ENCODE measurements at regions of chr1 and their contacts with region 1.

Region 1: DNA sequence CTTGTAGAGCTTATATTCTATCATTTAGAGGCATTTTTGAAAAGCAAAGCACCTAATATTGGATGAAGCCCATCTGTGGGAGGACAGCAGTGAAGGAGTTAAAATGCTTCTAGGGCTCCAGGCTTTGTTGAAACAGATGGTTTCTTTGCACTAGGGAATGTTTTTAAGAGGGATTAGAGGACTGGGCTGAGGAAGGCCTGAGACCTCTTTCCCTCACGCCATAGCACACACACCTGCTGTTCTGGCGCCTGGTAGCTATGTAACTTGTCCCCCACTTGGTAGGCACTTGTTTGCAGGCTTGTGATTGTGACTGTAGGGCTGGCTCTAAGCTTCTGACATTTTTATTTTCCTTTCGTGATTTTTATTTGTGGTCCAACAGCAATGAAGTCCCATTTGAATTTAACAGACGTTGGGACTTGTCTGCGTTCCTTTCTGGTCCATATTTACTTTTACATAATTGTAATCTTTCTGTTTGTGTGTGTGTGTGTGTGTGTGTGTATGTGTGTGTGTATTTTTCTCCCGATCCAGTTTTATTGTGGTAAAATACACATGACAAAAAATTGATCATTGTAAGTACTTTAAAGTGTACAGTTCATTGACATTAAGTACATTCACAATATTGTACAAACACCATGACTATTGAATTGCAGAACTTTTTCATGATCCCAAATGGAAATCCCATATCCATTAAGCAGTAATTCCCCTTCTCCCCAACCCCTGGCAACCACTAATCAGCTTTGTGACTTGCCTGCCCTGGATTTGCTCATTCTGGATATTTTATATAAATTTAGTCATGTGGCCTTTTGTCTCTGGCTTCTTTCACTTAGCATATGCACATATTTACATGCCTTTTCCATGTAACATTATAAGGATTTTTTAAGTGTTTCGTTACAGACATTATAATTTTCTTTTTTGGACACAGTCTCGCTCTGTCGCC is 33.5 kb upstream of the MACF1 start:
- DNase-seq: peak; percentile 54
- H3K4me3 ChIP-seq: no peak overlapping the region
- H3K27ac ChIP-seq: peak overlapping the region; percentile 12
- H3K4me1 ChIP-seq: peaks cover 35% of the 10 kb centered on the region
- H3K27me3 ChIP-seq: no peaks in the 10 kb centered on the region
- CTCF ChIP-seq: no peak

Region 2: GRCh38 chr1:39196244-39197215 is 25.5 kb after region 1 on chr1:
- CTCF ChIA-PET with region 1: interaction called, 10 read pairs
- POLR2A ChIA-PET with region 1: no interaction called
- intact Hi-C with region 1: no loop called
- DNase-seq: peak; percentile 82
- H3K4me3 ChIP-seq: no peak overlapping the region
- H3K27ac ChIP-seq: peak overlapping the region; percentile 36
- H3K4me1 ChIP-seq: peaks cover 55% of the 10 kb centered on the region
- H3K27me3 ChIP-seq: no peaks in the 10 kb centered on the region
- CTCF ChIP-seq: no peak

Region 3: GRCh38 chr1:39354572-39354971 is 183.6 kb after region 1 on chr1:
- CTCF ChIA-PET with region 1: interaction called, 10 read pairs
- POLR2A ChIA-PET with region 1: no interaction called
- intact Hi-C with region 1: no loop called
- DNase-seq: no peak
- H3K4me3 ChIP-seq: no peak overlapping the region
- H3K27ac ChIP-seq: no peak overlapping the region
- H3K4me1 ChIP-seq: no peaks in the 10 kb centered on the region
- H3K27me3 ChIP-seq: no peaks in the 10 kb centered on the region
- CTCF ChIP-seq: peak; percentile 35; the same call in 1 of the 2 replicates

Measured in A673 (cell line).